Activated naive CD4-positive, alpha-beta T cell treated with anti-CD3 and anti-CD28 coated beads for 36 hours (primary cell): ENCODE measurements at regions of chr3 and their contacts with region 1.

Region 1: DNA sequence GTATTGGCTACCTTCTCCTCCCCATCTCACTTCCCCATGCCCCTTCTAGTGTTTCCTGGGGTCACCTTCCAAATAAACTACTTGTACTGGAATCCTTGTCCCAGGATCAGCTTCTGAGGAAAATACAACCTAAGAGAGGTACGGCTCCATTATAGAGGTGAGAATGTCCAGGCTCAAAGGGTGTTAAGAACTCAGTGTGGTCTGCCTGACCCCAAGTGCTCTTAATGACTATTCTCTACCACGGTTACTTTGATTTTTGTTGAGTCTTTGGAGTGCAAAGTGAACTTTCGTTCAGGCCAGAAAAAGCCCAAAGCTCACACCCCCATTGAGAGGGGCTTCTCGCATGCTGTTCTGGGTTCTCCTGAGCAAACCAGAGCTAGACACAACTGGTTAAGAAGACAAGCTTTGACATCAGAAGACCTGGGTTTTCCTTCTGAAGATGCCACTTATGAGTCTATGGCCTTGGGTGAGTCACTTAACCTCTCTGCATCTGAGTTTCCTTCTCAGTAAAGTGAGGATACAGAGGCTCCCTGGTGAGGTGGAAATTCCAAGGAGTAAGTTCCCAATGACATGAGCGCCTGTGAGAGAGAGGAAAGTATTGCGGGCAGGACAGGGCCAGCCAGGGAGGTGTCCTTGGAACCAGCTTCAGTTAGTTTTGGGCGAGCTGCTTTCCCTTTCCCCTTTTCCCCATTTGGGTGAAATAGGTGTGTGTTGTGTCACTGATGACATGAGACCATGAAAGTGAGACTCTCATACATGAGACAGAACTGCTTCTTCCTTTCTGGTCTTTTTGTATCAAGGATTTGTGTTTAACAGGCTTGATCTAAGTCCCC is 475.0 kb upstream of the PROK2 start:
- DNase-seq: peak; percentile 46
- H3K4me3 Mint-ChIP-seq: no peak overlapping the region
- H3K27ac Mint-ChIP-seq: peak overlapping the region; percentile 82
- H3K4me1 Mint-ChIP-seq: peaks cover 58% of the 10 kb centered on the region
- H3K27me3 Mint-ChIP-seq: no peaks in the 10 kb centered on the region

Region 2: GRCh38 chr3:71984843-71985613 is 274.9 kb before region 1 on chr3:
- CTCF ChIA-PET with region 1: no interaction called
- intact Hi-C with region 1: loop called (anchors 1 kb)
- DNase-seq: peak; percentile 76
- H3K4me3 Mint-ChIP-seq: peak overlapping the region; percentile 48
- H3K27ac Mint-ChIP-seq: peak overlapping the region; percentile 84
- H3K4me1 Mint-ChIP-seq: peaks cover 43% of the 10 kb centered on the region
- H3K27me3 Mint-ChIP-seq: peaks cover 6% of the 10 kb centered on the region

Region 3: GRCh38 chr3:72152551-72153476 is 107.2 kb before region 1 on chr3:
- CTCF ChIA-PET with region 1: no interaction called
- intact Hi-C with region 1: no loop called
- DNase-seq: no peak
- H3K4me3 Mint-ChIP-seq: no peak overlapping the region
- H3K27ac Mint-ChIP-seq: no peak overlapping the region
- H3K4me1 Mint-ChIP-seq: no peaks in the 10 kb centered on the region
- H3K27me3 Mint-ChIP-seq: no peaks in the 10 kb centered on the region

Region 4: GRCh38 chr3:72210261-72210660 is 49.7 kb before region 1 on chr3:
- CTCF ChIA-PET with region 1: no interaction called
- intact Hi-C with region 1: no loop called
- DNase-seq: no peak
- H3K4me3 Mint-ChIP-seq: no peak overlapping the region
- H3K27ac Mint-ChIP-seq: no peak overlapping the region
- H3K4me1 Mint-ChIP-seq: peaks cover 4% of the 10 kb centered on the region
- H3K27me3 Mint-ChIP-seq: no peaks in the 10 kb centered on the region

Region 5: DNA sequence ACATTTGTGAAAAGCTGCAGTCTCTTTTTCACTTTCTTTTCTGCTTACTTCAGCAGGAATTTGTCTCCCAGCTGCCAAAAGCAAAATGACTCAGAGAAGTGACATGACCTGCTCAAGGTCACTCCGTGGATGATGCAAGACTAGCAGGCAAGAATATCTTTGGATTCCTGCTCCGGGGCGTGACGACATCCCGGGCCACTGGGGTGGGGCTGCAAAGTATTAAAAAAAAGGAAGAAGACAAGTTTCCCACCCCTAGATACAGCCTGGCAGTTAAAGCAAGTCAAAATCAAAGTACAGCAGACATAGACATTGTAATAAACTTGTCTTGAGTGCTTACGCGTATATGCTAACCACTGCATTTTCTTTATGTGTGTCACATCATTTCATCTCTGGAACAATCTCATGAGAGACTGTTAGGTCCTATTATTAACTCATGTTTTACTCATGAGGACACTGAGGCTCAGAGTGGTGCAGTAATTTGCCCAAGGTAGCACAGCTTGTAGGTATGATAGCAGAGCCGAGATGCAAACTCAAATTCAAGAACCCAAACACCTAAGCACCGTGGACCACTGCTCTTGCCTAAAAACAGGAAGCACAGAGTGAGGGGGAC is 10.2 kb after region 1 on chr3:
- CTCF ChIA-PET with region 1: interaction called, 3 read pairs
- intact Hi-C with region 1: loop called (anchors 1 kb)
- DNase-seq: peak; percentile 50
- H3K4me3 Mint-ChIP-seq: no peak overlapping the region
- H3K27ac Mint-ChIP-seq: peak overlapping the region; percentile 27
- H3K4me1 Mint-ChIP-seq: peaks cover 65% of the 10 kb centered on the region
- H3K27me3 Mint-ChIP-seq: no peaks in the 10 kb centered on the region

Region 6: DNA sequence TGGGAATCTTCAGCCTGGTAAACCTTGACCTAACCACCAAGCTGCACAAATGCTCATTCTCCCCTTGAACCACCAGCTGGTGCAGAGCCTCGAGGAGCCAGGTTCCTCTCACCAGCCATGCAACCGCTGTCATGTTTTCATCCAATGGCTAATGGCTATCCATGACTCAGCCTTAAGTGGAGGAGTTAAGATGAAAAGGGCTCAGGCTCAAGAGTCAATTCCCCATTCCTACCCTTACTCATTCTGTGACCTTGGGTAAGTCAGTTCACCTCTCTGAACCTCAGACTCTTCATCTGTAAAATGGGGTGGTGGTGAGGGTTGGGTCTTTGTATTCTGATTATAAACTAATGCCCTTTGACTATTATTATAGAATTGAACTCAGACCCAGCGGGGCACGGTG is 72.7 kb after region 1 on chr3:
- CTCF ChIA-PET with region 1: no interaction called
- intact Hi-C with region 1: no loop called
- DNase-seq: no peak
- H3K4me3 Mint-ChIP-seq: no peak overlapping the region
- H3K27ac Mint-ChIP-seq: no peak overlapping the region
- H3K4me1 Mint-ChIP-seq: no peaks in the 10 kb centered on the region
- H3K27me3 Mint-ChIP-seq: no peaks in the 10 kb centered on the region

Region 7: GRCh38 chr3:72375237-72376076 is 115.5 kb after region 1 on chr3:
- CTCF ChIA-PET with region 1: no interaction called
- intact Hi-C with region 1: loop called (anchors 1 kb)
- DNase-seq: peak; percentile 70
- H3K4me3 Mint-ChIP-seq: peak overlapping the region; percentile 20
- H3K27ac Mint-ChIP-seq: peak overlapping the region; percentile 82
- H3K4me1 Mint-ChIP-seq: peaks cover 62% of the 10 kb centered on the region
- H3K27me3 Mint-ChIP-seq: no peaks in the 10 kb centered on the region

Region 8: GRCh38 chr3:72634128-72634527 is 374.2 kb after region 1 on chr3:
- CTCF ChIA-PET with region 1: no interaction called
- intact Hi-C with region 1: loop called (anchors 5 kb)
- DNase-seq: peak; percentile 19
- H3K4me3 Mint-ChIP-seq: no peak overlapping the region
- H3K27ac Mint-ChIP-seq: no peak overlapping the region
- H3K4me1 Mint-ChIP-seq: peaks cover 39% of the 10 kb centered on the region
- H3K27me3 Mint-ChIP-seq: peaks cover 10% of the 10 kb centered on the region